PC-3 (cell line): ENCODE measurements at regions of chr7 and their contacts with region 1.

Region 1: DNA sequence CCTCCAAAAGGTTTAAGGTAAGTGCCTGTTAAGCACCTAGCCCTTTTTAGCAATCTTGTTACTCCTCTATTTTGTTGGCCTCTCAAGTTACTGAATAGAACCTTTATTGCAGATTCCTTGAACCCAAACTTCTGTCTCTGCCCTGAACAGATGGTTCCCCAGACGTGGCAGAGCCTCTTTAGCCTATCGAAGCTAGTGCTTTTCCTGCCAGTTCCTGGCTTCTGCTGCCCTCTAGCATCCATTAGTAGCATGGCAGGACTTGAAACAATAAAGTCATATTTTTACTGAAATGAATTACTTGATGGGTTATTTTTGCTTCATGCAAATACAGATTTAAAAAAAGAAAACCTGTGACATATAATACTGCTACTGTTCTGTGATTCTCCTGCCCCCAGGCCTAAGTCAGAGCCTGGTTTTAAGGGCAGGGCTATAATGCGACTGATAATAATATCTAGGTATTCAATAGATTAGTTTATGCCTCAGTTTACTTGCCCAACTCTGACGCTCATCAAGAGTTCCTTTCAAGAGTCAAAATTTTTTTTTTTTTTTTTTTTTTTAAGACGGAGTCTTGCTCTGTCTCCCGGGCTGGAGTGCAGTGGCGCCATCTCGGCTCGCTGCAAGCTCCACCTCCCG is 84.3 kb upstream of the PHF14 start:
- DNase-seq: peak; percentile 58
- ATAC-seq: peak; percentile 90
- H3K4me3 ChIP-seq: no peak overlapping the region
- H3K27ac ChIP-seq: no peak overlapping the region
- H3K4me1 ChIP-seq: no peaks in the 10 kb centered on the region
- H3K27me3 ChIP-seq: no peaks in the 10 kb centered on the region
- CTCF ChIP-seq: peak; percentile 82

Region 2: GRCh38 chr7:10632717-10633116 is 256.7 kb before region 1 on chr7:
- CTCF ChIA-PET with region 1: no interaction called
- POLR2A ChIA-PET with region 1: no interaction called
- intact Hi-C with region 1: loop called (anchors 10 kb)
- DNase-seq: no peak
- ATAC-seq: no peak
- H3K4me3 ChIP-seq: no peak overlapping the region
- H3K27ac ChIP-seq: no peak overlapping the region
- H3K4me1 ChIP-seq: no peaks in the 10 kb centered on the region
- H3K27me3 ChIP-seq: no peaks in the 10 kb centered on the region
- CTCF ChIP-seq: no peak

Region 3: GRCh38 chr7:10720047-10720446 is 169.3 kb before region 1 on chr7:
- CTCF ChIA-PET with region 1: no interaction called
- POLR2A ChIA-PET with region 1: no interaction called
- intact Hi-C with region 1: loop called (anchors 10 kb)
- DNase-seq: no peak
- ATAC-seq: no peak
- H3K4me3 ChIP-seq: no peak overlapping the region
- H3K27ac ChIP-seq: no peak overlapping the region
- H3K4me1 ChIP-seq: no peaks in the 10 kb centered on the region
- H3K27me3 ChIP-seq: no peaks in the 10 kb centered on the region
- CTCF ChIP-seq: no peak

Region 4: GRCh38 chr7:10950494-10950893 is 61.1 kb after region 1 on chr7:
- CTCF ChIA-PET with region 1: no interaction called
- POLR2A ChIA-PET with region 1: no interaction called
- intact Hi-C with region 1: no loop called
- DNase-seq: no peak
- ATAC-seq: no peak
- H3K4me3 ChIP-seq: no peak overlapping the region
- H3K27ac ChIP-seq: no peak overlapping the region
- H3K4me1 ChIP-seq: no peaks in the 10 kb centered on the region
- H3K27me3 ChIP-seq: no peaks in the 10 kb centered on the region
- CTCF ChIP-seq: no peak

Region 5: DNA sequence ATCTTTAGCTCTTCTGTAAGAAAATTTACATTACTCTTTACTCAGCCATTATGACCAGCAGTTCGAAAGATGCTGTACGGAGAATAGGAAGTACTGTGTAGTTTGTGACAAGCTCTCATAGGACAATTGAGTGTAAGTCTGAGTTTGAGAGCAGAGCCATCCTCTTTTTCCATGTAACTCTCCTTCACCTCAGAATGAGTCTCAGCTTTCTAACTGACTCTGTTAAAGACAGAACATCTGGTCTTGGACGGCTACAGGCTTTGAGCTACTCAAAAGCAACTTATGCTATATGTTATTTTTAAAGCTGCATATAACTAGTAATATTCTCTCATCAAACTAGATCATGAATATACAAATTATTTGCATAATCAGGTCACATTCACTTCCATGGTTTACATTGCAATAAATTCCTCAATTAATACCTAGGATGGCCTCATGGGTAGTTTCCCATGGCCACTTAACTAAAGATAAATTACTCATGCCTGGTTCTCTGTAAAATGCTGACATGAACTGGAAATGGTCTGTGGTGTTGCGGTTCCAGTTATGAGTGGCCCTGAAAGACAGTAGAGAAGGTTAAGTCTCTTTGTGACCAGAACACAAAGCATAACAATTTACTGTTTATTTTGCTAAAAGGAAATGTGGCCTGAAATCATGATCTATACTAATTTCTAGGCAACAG is 442.9 kb after region 1 on chr7:
- CTCF ChIA-PET with region 1: no interaction called
- POLR2A ChIA-PET with region 1: no interaction called
- intact Hi-C with region 1: no loop called
- DNase-seq: no peak
- ATAC-seq: no peak
- H3K4me3 ChIP-seq: no peak overlapping the region
- H3K27ac ChIP-seq: no peak overlapping the region
- H3K4me1 ChIP-seq: peaks cover 4% of the 10 kb centered on the region; the same call in 1 of the 2 replicates
- H3K27me3 ChIP-seq: no peaks in the 10 kb centered on the region
- CTCF ChIP-seq: no peak